IMR-90 (cell line): ENCODE measurements at regions of chr4 and their contacts with region 1.

Region 1: DNA sequence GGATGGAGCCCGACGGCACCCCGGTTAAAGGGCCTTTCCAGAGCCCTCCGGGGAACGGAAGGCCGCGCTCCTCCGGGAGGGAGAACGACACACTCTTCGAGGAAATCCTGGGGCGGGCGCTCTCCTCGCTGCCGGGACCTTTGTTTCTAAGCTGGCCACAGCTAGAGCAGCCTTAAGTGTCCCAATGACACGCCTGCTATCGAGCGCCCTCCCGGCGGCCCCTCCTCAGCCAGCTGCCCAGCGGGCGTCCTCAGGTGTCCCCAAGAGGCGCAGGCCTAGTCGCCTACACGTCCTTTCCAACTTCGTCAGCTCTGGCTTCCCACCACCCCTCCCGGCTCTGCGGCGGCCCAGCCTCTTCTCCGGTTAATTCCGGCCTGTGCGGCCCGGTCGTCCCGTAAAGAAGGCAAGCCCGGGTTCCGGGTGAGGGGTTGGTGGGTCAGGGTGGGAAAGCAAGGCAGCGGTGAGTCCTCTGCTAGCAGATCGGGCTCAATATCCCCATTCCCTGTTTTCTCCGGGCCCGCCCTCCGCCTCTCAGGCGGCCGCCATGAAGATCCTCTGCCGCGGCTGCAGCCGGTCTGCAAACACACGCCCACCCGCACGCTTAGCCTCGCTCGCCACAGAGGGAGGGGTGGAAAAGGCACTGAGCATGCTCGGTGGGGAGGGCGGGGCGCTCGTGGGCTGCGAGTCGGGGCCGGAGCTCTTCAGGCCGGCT is 449 bp upstream of the RAP1GDS1 start:
- DNase-seq: peak; percentile 96
- ATAC-seq: peak; percentile 95
- H3K4me3 ChIP-seq: peak overlapping the region; percentile 51
- H3K27ac ChIP-seq: peak overlapping the region; percentile 82
- H3K4me1 ChIP-seq: peaks cover 4% of the 10 kb centered on the region
- H3K27me3 ChIP-seq: no peaks in the 10 kb centered on the region
- CTCF ChIP-seq: no peak
- POLR2A ChIP-seq: peak; percentile 91
- RAD21 ChIP-seq: no peak

Region 2: GRCh38 chr4:98150092-98150761 is 110.5 kb before region 1 on chr4:
- CTCF ChIA-PET with region 1: no interaction called
- POLR2A ChIA-PET with region 1: no interaction called
- dilution Hi-C with region 1: no loop called
- in situ Hi-C with region 1: no loop called
- intact Hi-C with region 1: loop called (anchors 1 kb)
- DNase-seq: peak; percentile 16
- ATAC-seq: peak; percentile 59
- H3K4me3 ChIP-seq: no peak overlapping the region
- H3K27ac ChIP-seq: peak overlapping the region; percentile 29; the same call in 1 of the 2 replicates
- H3K4me1 ChIP-seq: peaks cover 2% of the 10 kb centered on the region; the same call in 1 of the 2 replicates
- H3K27me3 ChIP-seq: no peaks in the 10 kb centered on the region
- CTCF ChIP-seq: peak; percentile 45
- POLR2A ChIP-seq: no peak
- RAD21 ChIP-seq: peak; percentile 50

Region 3: DNA sequence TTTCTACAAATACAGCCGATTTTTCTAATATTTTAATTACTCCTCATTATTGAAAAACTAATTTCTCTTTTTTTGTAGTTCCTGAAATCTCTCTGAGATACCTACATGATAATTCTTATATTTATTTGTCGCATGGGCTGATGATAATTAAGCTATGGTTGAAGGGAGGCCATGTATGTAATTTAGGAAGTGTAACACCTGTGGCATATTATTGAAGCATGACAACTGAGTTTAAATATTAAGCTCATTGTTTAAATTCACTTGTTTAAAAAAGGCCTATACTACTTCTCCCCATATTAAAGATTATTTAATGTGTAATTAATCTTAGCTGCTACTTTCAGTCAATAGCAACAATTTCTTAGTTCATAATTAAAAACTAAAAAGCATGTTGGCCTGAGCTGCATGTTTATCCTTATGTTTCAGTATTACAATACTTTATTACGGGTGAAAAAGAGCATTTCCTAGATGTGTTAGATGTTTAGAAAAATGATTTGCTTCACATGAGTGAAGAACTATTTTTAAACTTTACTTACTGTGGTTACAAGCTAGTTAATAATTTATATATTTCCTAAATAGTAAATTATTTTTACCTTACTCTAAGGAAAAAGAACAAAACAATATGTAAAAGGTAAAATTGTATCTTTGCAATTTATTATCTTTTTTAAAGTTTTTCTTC is 122.8 kb after region 1 on chr4:
- CTCF ChIA-PET with region 1: no interaction called
- POLR2A ChIA-PET with region 1: no interaction called
- dilution Hi-C with region 1: no loop called
- in situ Hi-C with region 1: no loop called
- intact Hi-C with region 1: loop called (anchors 5 kb)
- DNase-seq: no peak
- ATAC-seq: no peak
- H3K4me3 ChIP-seq: no peak overlapping the region
- H3K27ac ChIP-seq: no peak overlapping the region
- H3K4me1 ChIP-seq: peaks cover 3% of the 10 kb centered on the region; the same call in 1 of the 2 replicates
- H3K27me3 ChIP-seq: no peaks in the 10 kb centered on the region
- CTCF ChIP-seq: no peak
- POLR2A ChIP-seq: no peak
- RAD21 ChIP-seq: no peak

Region 4: GRCh38 chr4:98430708-98431403 is 170.1 kb after region 1 on chr4:
- CTCF ChIA-PET with region 1: no interaction called
- POLR2A ChIA-PET with region 1: no interaction called
- dilution Hi-C with region 1: no loop called
- in situ Hi-C with region 1: no loop called
- intact Hi-C with region 1: loop called (anchors 10 kb)
- DNase-seq: peak; percentile 96
- ATAC-seq: peak; percentile 91
- H3K4me3 ChIP-seq: no peak overlapping the region
- H3K27ac ChIP-seq: peak overlapping the region; percentile 33
- H3K4me1 ChIP-seq: peaks cover 6% of the 10 kb centered on the region
- H3K27me3 ChIP-seq: no peaks in the 10 kb centered on the region
- CTCF ChIP-seq: no peak
- POLR2A ChIP-seq: no peak
- RAD21 ChIP-seq: no peak

Region 5: DNA sequence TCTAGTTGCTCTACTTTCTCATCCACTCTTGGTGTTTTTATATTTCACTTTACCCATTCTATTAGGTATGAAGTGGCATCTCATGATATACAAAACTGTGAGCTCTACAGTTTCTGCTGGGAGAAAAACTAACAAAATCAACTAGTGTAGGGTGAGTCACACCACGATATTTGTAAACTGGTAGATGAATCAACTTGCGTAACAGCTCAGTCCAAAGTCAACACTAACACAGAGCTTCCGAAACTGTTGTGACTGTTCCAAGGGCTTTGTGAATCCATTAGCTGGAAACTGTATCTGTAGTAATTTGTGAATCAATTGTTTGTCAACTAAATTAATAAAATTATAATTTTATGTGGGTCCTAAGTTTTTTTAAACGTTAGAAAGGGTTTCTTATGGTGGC is 517.5 kb after region 1 on chr4:
- CTCF ChIA-PET with region 1: no interaction called
- POLR2A ChIA-PET with region 1: no interaction called
- dilution Hi-C with region 1: no loop called
- in situ Hi-C with region 1: no loop called
- intact Hi-C with region 1: loop called (anchors 1 kb)
- DNase-seq: peak; percentile 91
- ATAC-seq: peak; percentile 71
- H3K4me3 ChIP-seq: no peak overlapping the region
- H3K27ac ChIP-seq: no peak overlapping the region
- H3K4me1 ChIP-seq: peaks cover 17% of the 10 kb centered on the region
- H3K27me3 ChIP-seq: peaks cover 12% of the 10 kb centered on the region
- CTCF ChIP-seq: no peak
- POLR2A ChIP-seq: no peak
- RAD21 ChIP-seq: no peak

Region 6: GRCh38 chr4:98928505-98929340 is 668.0 kb after region 1 on chr4 and contains the start of gene EIF4E:
- CTCF ChIA-PET with region 1: no interaction called
- POLR2A ChIA-PET with region 1: no interaction called
- dilution Hi-C with region 1: no loop called
- in situ Hi-C with region 1: no loop called
- intact Hi-C with region 1: loop called (anchors 2 kb)
- DNase-seq: peak; percentile 99
- ATAC-seq: peak; percentile 80
- H3K4me3 ChIP-seq: peak within 1 kb of the TSS; percentile 85
- H3K27ac ChIP-seq: peak within 1 kb of the TSS; percentile 94
- H3K4me1 ChIP-seq: peaks cover 3% of the 10 kb centered on the region; the same call in 1 of the 2 replicates
- H3K27me3 ChIP-seq: no peaks in the 10 kb centered on the region
- CTCF ChIP-seq: 0 out of 2 replicates have a peak, but pooled peaks have one; percentile 20
- POLR2A ChIP-seq: 0 out of 2 replicates have a peak, but pooled peaks have one; percentile 60
- RAD21 ChIP-seq: no peak
- total RNA-seq, gene EIF4E: 113 and 288 TPM in 2 replicates